Activated T-helper 1 cell treated with anti-CD3 and anti-CD28 coated beads, Interleukin-12 subunit alpha, Interleukin-12 subunit beta, Interleukin-2, Interleukin-4 antibody, amounts not matched to agents 30 ng/mL and 10 ng/mL and 1 ng/mL, durations not matched to agents 14 hours and 24 hours and 36 hours (primary cell): ENCODE measurements at regions of chr1 and their contacts with region 1.

Region 1: GRCh38 chr1:26353976-26354820 is at the start of gene CRYBG2:
- DNase-seq: no peak
- H3K4me3 Mint-ChIP-seq: no peak within 1 kb of the TSS
- H3K27ac Mint-ChIP-seq: no peak within 1 kb of the TSS
- H3K4me1 Mint-ChIP-seq: peaks cover 22% of the 10 kb centered on the region
- H3K27me3 Mint-ChIP-seq: peaks cover 7% of the 10 kb centered on the region
- total RNA-seq, gene CRYBG2: 0.83 and 1.9 TPM in 2 replicates

Region 2: GRCh38 chr1:26122988-26123973 is 230.9 kb before region 1 on chr1:
- intact Hi-C with region 1: no loop called
- DNase-seq: no peak
- H3K4me3 Mint-ChIP-seq: peak overlapping the region; percentile 1
- H3K27ac Mint-ChIP-seq: peak overlapping the region; percentile 72
- H3K4me1 Mint-ChIP-seq: peaks cover 78% of the 10 kb centered on the region
- H3K27me3 Mint-ChIP-seq: no peaks in the 10 kb centered on the region

Region 3: DNA sequence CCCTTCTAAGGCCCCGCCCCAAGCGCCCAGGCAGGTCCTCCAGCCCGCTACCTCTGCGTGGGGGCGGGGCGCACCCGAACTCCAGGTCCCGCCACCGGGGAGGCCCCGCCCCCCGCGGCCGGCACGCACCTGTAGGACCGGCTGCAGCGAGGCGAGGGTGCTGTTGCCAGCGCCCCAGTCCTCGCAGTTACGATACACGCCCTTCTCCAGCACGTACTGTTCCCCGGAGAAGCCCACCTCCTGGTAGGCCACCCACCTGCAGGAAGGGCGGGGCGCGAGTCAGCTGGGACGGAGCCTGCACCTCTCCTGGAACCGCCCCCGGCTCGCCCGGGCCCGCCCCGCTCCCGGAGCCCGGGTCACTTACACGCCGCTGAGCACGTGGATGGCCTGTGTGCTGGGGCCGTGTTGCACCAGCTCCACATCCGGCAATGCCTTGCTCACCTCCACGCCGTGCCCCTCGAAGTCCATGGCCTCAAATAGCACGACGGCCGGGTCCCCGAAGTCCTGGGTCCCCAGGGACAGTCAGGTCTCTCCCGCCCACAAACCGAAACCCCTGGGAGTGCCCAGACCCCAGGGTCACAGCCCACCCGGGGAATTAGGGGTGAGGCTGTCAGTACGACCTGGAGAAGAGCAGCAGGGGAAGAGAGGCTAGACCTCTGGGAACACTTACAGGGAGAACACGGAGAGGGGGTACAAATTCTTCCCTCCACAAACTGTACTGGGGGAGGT is 17.6 kb before region 1 on chr1:
- intact Hi-C with region 1: loop called (anchors 2 kb)
- DNase-seq: peak; percentile 70
- H3K4me3 Mint-ChIP-seq: peak overlapping the region; percentile 90
- H3K27ac Mint-ChIP-seq: no peak overlapping the region
- H3K4me1 Mint-ChIP-seq: peaks cover 9% of the 10 kb centered on the region
- H3K27me3 Mint-ChIP-seq: peaks cover 27% of the 10 kb centered on the region